ENCODE measurements at regions of chr3 and their contacts with region 1.

Region 1: DNA sequence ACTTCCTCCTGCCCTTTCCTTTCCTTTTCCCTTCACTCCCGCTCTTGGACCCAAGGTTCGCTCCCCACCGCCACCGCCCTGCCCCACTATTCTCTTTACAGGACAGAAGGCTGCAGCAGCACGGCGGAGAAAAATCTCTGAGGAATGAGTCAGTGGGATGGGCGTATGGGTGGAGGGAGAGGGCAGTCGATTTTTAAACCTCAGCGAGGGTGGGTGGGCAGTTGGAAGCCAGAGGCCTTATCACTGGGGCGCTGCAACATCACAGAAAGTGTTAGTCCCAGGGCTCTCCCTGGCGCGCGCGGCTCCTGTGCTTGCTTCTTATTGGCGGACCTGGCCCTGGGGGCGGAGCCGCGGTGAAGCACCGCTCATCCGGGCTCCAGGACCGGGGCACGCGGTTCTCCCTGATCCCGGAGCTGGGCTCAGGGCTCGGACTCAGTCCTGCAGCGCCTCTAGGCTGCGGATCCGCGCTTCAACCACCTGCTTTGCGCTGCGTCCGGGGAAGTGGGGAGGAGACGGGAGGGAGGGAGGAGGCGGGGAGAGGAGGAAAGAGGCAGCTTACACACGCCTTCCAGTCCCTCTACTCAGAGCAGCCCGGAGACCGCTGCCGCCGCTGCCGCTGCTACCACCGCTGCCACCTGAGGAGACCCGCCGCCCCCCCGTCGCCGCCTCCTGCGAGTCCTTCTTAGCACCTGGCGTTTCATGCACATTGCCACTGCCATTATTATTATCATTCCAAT is at the start of gene ALCAM:
- DNase-seq: peak; percentile 97
- ATAC-seq: peak; percentile 81
- H3K4me3 ChIP-seq: peak within 1 kb of the TSS; percentile 74 to 91
- H3K27ac ChIP-seq: peak within 1 kb of the TSS; percentile 78
- H3K4me1 ChIP-seq: peaks cover 13 to 49% of the 10 kb centered on the region in 2 experiments; a peak in 3 of 4 replicates
- H3K27me3 ChIP-seq: no peaks in the 10 kb centered on the region
- CTCF ChIP-seq: peak; percentile 52 to 78 (median 58)
- POLR2A ChIP-seq: no peak
- RAD21 ChIP-seq: peak; percentile 97
- total RNA-seq, gene ALCAM: 56.7 TPM

Region 2: GRCh38 chr3:104102386-104102785 is 1264.1 kb before region 1 on chr3:
- CTCF ChIA-PET with region 1: interaction called, 4 read pairs
- POLR2A ChIA-PET with region 1: no interaction called
- RAD21 ChIA-PET with region 1: no interaction called
- intact Hi-C with region 1: loop called (anchors 5 kb)
- DNase-seq: peak; percentile 45
- ATAC-seq: peak; percentile 97
- H3K4me3 ChIP-seq: no peak overlapping the region
- H3K27ac ChIP-seq: no peak overlapping the region
- H3K4me1 ChIP-seq: peaks cover 0 to 3% of the 10 kb centered on the region in 2 experiments; a peak in 1 of 4 replicates
- H3K27me3 ChIP-seq: no peaks in the 10 kb centered on the region
- CTCF ChIP-seq: peak; percentile 35 to 74 (median 73); a peak in 5 of 6 replicates
- POLR2A ChIP-seq: no peak
- RAD21 ChIP-seq: peak; percentile 65

Region 3: DNA sequence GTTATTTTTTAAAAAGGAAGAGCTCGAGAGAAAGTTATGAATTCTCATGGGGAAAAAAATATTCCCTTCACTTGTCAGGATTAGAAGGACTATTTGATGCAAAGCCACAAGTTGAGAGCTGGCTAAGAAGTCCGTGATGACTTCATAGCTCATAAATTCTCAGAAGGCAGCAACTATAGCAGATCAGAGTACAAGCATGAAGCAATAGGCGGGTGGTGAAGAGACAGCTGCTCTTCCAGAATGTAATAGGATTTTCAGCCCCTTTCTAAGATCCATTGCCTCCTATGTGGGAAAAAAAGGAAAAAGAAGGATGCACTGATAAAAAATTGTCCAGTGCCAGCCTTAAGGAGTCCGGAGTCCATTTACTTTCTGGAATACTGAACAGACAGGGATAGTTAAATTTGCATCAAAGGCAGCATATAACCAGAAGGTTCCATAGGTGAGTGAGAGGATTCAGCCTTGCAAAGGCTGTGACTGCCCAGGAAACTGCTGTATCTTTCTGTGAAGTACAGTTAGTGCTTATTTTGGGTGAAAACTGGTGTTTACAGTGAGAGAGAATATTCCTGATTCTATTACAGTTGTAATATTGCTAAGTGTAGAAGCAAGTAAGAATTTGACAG is 929.3 kb before region 1 on chr3:
- CTCF ChIA-PET with region 1: no interaction called
- POLR2A ChIA-PET with region 1: interaction called, 4 read pairs
- RAD21 ChIA-PET with region 1: no interaction called
- intact Hi-C with region 1: loop called (anchors 2 kb)
- DNase-seq: peak; percentile 38
- ATAC-seq: peak; percentile 82
- H3K4me3 ChIP-seq: peak overlapping the region in 1 of 2 experiments; percentile 26; a peak in 2 of 4 replicates
- H3K27ac ChIP-seq: peak overlapping the region; percentile 61
- H3K4me1 ChIP-seq: peaks cover 46 to 72% of the 10 kb centered on the region in 2 experiments
- H3K27me3 ChIP-seq: no peaks in the 10 kb centered on the region
- CTCF ChIP-seq: no peak
- POLR2A ChIP-seq: no peak
- RAD21 ChIP-seq: 0 out of 2 replicates have a peak, but pooled peaks have one; percentile 6

Region 4: DNA sequence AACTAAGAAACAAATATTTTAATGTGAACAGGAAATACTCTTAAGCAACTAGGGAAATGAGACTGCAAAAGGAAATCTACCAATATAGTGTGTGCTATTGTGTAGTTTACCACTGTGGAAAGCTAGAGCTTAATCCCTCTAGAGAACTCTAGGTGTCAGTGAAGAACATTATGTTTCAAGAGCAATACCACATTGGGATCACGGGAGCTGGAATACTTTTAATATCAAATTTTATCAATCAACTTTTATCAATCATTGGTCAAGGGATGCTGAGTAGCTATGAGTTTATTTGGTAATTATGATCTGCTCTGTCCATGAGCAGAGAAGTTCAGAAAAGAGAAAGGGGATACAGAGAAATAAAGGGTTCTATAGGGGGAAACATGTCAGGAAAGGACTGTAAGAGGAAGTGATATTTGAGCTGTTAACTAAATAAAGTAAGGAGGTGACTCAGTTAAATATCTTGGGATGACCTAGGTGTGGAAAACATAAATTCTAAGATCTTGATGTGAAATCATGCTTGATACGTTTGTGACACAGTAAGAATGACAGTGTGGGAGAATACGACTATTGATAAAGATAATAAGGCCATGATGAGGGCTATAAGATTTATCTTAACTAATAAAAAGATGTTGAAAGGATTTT is 762.0 kb before region 1 on chr3:
- CTCF ChIA-PET with region 1: interaction called, 20 read pairs
- POLR2A ChIA-PET with region 1: interaction called, 8 read pairs
- RAD21 ChIA-PET with region 1: no interaction called
- intact Hi-C with region 1: loop called (anchors 2 kb)
- DNase-seq: peak; percentile 18
- ATAC-seq: peak; percentile 87
- H3K4me3 ChIP-seq: no peak overlapping the region
- H3K27ac ChIP-seq: no peak overlapping the region
- H3K4me1 ChIP-seq: no peaks in the 10 kb centered on the region
- H3K27me3 ChIP-seq: no peaks in the 10 kb centered on the region
- CTCF ChIP-seq: peak; percentile 9 to 46 (median 31); a peak in 4 of 6 replicates
- POLR2A ChIP-seq: no peak
- RAD21 ChIP-seq: peak; percentile 52

Region 5: DNA sequence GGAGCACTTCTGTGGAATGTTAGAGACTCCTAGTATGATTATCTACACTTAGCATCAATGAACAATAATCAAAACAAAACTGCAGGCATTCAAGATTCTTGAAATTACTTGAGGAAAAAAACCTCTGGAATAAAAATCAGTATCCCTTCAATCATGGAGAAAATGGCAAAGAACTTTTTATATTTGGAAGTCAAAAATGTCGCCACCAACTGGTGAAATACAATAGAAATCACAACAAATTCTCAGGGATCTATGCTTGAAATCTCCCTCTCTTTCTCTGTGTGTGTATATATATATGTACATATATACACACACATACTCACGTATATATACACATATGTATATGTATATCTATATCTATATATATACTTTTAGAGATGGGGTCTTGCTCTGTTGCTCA is 378.6 kb before region 1 on chr3:
- CTCF ChIA-PET with region 1: no interaction called
- POLR2A ChIA-PET with region 1: no interaction called
- RAD21 ChIA-PET with region 1: no interaction called
- intact Hi-C with region 1: loop called (anchors 10 kb)
- DNase-seq: no peak
- ATAC-seq: no peak
- H3K4me3 ChIP-seq: no peak overlapping the region
- H3K27ac ChIP-seq: no peak overlapping the region
- H3K4me1 ChIP-seq: no peaks in the 10 kb centered on the region
- H3K27me3 ChIP-seq: no peaks in the 10 kb centered on the region
- CTCF ChIP-seq: peak in 2 of 3 experiments; percentile 3 to 39; a peak in 2 of 6 replicates
- POLR2A ChIP-seq: no peak
- RAD21 ChIP-seq: no peak

Region 6: DNA sequence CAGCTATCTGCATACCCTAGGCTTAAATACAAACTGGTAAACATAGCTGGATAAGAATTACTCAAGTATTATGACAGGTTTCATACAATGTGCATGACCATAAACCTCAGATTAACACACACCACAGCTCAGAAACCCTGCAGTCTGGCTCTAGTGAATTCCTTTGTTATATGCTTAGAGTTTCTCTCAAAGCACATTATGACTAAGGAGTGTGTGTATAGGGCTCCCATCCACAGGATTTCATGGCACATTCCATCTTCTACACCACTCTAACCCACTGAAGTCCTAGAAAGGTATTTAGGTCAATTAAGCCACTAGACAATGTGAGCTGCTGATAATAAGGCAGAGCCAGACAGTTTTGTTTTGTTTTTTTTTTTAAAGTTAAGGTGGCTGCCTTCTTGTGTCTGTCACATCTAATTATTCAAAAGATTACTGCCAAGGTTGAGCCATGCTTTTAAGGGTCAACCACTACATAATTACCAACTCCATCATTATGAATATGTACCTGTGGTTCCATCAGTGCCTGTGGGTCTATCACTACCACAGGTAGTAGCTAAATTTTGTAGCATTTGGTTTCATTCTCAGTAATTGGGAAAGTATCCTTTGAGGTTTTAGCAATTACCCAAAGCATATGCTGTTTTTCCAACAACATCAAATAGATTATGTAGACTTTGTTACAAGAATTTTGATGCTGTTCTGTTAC is 107.2 kb after region 1 on chr3:
- CTCF ChIA-PET with region 1: no interaction called
- POLR2A ChIA-PET with region 1: no interaction called
- RAD21 ChIA-PET with region 1: no interaction called
- intact Hi-C with region 1: no loop called
- DNase-seq: no peak
- ATAC-seq: peak; percentile 14; the same call in 1 of the 2 replicates
- H3K4me3 ChIP-seq: no peak overlapping the region
- H3K27ac ChIP-seq: no peak overlapping the region
- H3K4me1 ChIP-seq: no peaks in the 10 kb centered on the region
- H3K27me3 ChIP-seq: no peaks in the 10 kb centered on the region
- CTCF ChIP-seq: no peak
- POLR2A ChIP-seq: no peak
- RAD21 ChIP-seq: no peak

Region 7: GRCh38 chr3:105518806-105519418 is 152.4 kb after region 1 on chr3:
- CTCF ChIA-PET with region 1: interaction called, 3 read pairs
- POLR2A ChIA-PET with region 1: no interaction called
- RAD21 ChIA-PET with region 1: interaction called in 1 of 2 experiments, 3 read pairs
- intact Hi-C with region 1: loop called (anchors 2 kb)
- DNase-seq: peak; percentile 54
- ATAC-seq: peak; percentile 83
- H3K4me3 ChIP-seq: no peak overlapping the region
- H3K27ac ChIP-seq: no peak overlapping the region
- H3K4me1 ChIP-seq: peaks cover 0 to 3% of the 10 kb centered on the region in 2 experiments; a peak in 1 of 4 replicates
- H3K27me3 ChIP-seq: no peaks in the 10 kb centered on the region
- CTCF ChIP-seq: peak; percentile 39 to 73 (median 57); a peak in 4 of 6 replicates
- POLR2A ChIP-seq: no peak
- RAD21 ChIP-seq: peak; percentile 84

Measured in HCT116 (cell line).